ENCODE measurements at regions of chr14 and their contacts with region 1.

Region 1: DNA sequence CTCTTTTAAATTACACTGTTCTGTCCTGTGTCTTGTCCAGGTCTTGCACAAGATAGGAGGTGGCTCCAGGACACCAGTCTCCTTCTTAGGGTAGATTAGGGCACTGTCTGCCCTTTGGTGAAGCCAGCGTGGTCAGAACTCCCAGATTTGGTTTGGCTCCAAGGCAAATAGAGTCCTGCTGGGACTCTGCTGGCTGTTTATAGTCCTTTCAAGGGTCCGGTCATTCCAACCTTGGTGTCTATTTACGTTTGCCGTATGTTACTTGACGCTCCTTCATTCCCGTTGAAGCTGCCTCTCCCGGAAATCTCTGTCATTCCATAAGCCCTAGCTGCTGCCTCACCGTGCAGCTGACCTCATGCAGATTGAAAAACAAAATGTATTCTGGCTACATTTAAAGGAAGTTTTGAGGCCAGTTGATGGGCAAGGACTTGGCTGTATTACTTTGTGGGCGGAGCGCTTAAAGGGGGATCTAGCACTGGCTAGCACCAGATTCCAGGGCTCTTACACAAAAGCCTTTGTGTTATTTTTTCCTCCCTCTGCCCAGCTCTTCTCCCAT is 180.6 kb downstream of the AKAP6 start:
- DNase-seq: peak in 4 of 5 donors; percentile 52 to 81 (median 57)
- ATAC-seq: peak; percentile 84 to 92 (median 90)
- H3K4me3 ChIP-seq: peak overlapping the region in 7 of 12 donors; percentile 2 to 39 (median 15)
- H3K27ac ChIP-seq: peak overlapping the region; percentile 61 to 96 (median 84)
- H3K4me1 ChIP-seq: peaks cover 0 to 75% (median 23%) of the 10 kb centered on the region in 12 donors
- H3K27me3 ChIP-seq: no peaks in the 10 kb centered on the region
- CTCF ChIP-seq: no peak
- POLR2A ChIP-seq: no peak

Region 2: GRCh38 chr14:32426586-32427388 is 82.9 kb before region 1 on chr14:
- intact Hi-C with region 1: loop called in 1 of 10 experiments (anchors 10 kb)
- DNase-seq: no peak
- ATAC-seq: peak; percentile 53 to 85 (median 74)
- H3K4me3 ChIP-seq: no peak overlapping the region
- H3K27ac ChIP-seq: peak overlapping the region in 11 of 12 donors; percentile 42 to 78 (median 71)
- H3K4me1 ChIP-seq: peaks cover 0 to 16% (median 2%) of the 10 kb centered on the region in 12 donors
- H3K27me3 ChIP-seq: no peaks in the 10 kb centered on the region
- CTCF ChIP-seq: no peak
- POLR2A ChIP-seq: no peak

Region 3: DNA sequence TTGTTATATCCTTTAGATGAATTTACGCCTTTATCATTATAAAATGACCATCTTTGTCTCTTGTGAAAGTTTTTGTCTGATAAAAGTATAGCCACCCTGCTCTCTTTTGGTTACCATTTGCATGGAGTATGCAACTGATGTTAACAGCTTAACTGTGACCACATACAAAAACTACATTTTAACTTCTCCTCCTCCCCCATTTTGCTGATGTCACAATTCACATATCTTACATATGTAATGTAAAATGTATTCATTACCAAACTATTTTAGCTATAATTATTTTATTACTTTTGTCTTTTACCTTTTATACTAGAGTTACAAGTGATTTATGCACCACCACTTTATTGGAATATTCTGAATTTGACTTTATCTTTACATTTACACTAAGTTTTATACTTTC is 244.5 kb after region 1 on chr14:
- intact Hi-C with region 1: no loop called
- DNase-seq: no peak
- ATAC-seq: no peak
- H3K4me3 ChIP-seq: no peak overlapping the region
- H3K27ac ChIP-seq: no peak overlapping the region
- H3K4me1 ChIP-seq: peaks cover 0 to 9% (median 0%) of the 10 kb centered on the region in 12 donors
- H3K27me3 ChIP-seq: no peaks in the 10 kb centered on the region
- CTCF ChIP-seq: no peak
- POLR2A ChIP-seq: no peak

Region 4: DNA sequence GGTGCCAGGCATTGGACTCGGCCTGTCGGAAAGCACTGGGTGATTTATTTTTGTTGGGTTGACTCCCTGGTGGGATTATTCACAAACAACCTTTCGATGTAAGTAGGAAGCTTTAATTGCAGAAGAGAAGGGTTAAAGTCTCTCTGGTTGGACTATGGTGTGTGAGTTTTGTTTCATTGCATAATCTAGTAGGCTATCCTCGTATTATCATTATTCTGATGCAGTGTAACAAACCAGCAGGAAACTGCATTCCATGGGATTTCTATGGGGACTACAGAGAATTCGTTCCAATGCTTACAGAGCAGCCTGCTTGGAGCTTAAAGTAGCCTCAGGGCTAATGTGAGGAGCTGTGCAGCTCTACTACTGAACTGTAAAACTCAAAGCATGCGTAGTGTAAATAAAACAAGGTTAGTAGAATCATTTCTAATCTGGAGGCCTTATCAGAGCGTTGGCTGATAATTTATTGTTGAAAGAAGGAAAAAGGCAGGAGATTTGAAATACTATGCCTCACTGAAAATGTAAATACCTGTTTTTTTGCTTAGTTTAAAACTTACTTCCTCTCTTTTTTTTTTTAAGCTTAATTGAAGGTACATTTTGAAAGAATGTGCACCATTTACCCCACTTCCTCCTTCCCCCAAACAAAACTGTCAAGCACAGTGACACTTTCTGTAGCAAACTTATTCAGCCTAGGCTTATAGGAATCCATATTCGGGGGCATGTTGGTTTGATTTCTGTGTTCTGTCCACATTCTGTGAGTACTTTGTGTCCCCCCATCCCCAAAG is 655.6 kb after region 1 on chr14:
- intact Hi-C with region 1: no loop called
- DNase-seq: no peak
- ATAC-seq: no peak
- H3K4me3 ChIP-seq: no peak overlapping the region
- H3K27ac ChIP-seq: no peak overlapping the region
- H3K4me1 ChIP-seq: peaks cover 0 to 6% (median 0%) of the 10 kb centered on the region in 12 donors
- H3K27me3 ChIP-seq: no peaks in the 10 kb centered on the region
- CTCF ChIP-seq: no peak
- POLR2A ChIP-seq: no peak

Region 5: DNA sequence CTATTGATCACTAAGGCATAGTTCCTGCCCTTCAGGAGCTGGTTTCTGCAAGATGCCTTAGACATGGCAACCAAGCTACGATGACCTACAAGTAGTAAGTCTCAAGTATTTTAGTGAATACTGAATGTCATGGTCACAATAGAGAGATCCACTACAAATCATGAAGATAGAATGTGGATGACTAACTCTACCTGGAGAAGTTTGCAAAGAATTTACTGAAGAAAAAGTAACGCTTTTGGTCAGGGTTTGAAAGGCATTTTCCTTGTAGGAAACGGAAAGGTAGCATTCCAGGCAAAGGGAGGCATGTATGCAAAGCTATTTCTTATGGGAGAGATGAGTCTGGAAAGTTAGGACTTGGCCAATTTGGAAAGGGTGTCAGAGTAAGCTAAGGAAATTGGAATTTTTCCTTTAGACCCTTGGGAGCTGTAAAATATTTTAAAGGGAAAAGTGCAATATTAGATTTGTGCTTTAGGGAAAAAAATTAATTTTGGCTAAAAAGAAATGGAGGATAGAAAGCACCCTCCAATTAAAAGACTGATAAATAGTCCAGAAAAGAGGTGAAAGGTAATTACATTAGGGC is 1063.7 kb after region 1 on chr14:
- intact Hi-C with region 1: no loop called
- DNase-seq: no peak
- ATAC-seq: no peak
- H3K4me3 ChIP-seq: no peak overlapping the region
- H3K27ac ChIP-seq: no peak overlapping the region
- H3K4me1 ChIP-seq: peaks cover 0 to 3% (median 0%) of the 10 kb centered on the region in 12 donors
- H3K27me3 ChIP-seq: no peaks in the 10 kb centered on the region
- CTCF ChIP-seq: no peak
- POLR2A ChIP-seq: no peak